H1 (cell line): ENCODE measurements at regions of chr6 and their contacts with region 1.

Region 1: DNA sequence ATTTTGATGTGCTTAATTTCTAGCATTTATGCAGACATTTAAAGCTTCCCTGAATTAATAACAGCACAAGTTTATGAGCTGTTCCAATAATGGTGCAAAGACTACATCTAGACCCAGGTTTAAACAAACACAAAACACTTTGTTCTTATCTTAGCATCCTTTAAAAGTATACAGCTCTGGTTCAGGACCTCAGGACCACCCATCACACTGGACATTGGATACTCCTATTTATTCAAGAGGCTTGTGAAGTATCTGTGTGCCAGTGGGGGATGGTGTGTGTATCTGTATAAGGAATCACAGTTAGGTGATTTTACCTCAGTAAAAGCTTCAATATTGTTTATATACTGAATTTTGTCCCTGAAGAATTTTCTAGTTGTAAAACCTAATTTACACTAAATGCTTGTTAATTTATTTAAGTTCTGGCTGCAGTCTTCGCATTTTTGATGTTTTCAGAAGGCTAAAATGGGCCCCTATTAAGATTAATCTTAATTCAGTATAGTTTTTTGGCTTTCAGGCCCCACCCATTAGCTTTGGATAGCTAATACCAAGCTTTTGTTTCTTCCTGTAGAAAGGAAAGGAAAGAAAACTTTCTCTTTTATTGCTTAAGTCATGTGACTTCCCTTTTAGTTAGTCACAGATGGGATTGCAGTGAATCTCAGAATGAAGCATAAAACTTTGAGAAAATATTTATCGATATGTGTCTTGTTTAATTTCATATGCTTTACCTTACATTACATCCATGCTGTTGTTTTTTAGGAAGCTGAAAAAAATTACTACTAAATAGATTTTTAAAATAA is 13.1 kb downstream of the LIN28B start:
- DNase-seq: no peak
- H3K4me3 ChIP-seq: peak overlapping the region in 1 of 4 experiments; percentile 21; a peak in 1 of 8 replicates
- H3K27ac ChIP-seq: no peak overlapping the region
- H3K4me1 ChIP-seq: peaks cover 0 to 11% (median 5%) of the 10 kb centered on the region in 4 experiments; a peak in 5 of 7 replicates
- H3K27me3 ChIP-seq: no peaks in the 10 kb centered on the region
- CTCF ChIP-seq: no peak
- EP300 ChIP-seq: no peak
- POLR2A ChIP-seq: no peak
- RAD21 ChIP-seq: no peak

Region 2: GRCh38 chr6:104921896-104922295 is 48.1 kb before region 1 on chr6:
- CTCF ChIA-PET with region 1: no interaction called
- POLR2A ChIA-PET with region 1: no interaction called
- DNase-seq: no peak
- H3K4me3 ChIP-seq: no peak overlapping the region
- H3K27ac ChIP-seq: no peak overlapping the region
- H3K4me1 ChIP-seq: peaks cover 0 to 3% (median 1%) of the 10 kb centered on the region in 4 experiments; a peak in 2 of 7 replicates
- H3K27me3 ChIP-seq: no peaks in the 10 kb centered on the region
- CTCF ChIP-seq: no peak
- EP300 ChIP-seq: no peak
- POLR2A ChIP-seq: no peak
- RAD21 ChIP-seq: no peak

Region 3: DNA sequence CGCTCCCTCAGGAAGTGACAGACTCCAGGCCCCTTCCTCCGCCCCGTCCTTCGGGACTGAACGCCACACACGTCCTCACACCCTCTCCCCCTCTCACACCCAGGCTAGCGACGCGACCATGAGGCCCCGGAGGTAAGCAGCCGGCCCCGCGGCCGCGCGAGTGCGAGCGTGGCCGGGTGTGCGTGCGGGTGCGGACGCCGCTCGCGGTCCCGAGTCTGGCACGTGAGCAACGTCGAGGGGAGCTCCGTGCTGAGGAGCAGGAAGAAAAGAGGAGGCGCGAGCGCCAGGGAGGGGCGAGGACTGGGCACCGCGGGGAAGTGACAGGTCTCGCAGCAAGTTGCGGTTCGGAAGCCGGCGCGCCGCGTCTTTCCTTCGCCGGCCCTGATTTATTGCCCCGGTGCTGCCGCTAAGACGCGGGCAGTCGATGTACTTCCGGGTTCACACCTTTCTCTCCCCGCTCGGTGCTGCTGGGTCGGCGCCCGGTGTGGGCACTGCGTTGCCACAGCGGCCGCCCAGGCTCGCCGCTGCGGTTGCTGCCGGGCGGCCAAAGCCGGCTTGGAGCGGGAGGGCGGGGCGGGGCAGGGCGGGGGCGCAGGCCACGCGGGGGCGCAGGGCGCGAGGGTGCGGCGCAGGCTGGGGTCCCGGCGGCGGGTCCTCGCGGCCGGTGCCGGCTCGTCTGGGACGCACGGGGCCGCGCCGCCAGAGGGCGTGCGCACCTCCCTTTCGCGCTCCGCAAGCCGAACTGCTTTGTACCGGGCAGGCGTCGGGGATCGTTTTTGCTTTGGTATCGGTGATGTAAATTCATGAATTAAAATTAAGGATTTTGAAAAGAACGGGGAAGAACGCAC is 28.9 kb before region 1 on chr6:
- CTCF ChIA-PET with region 1: interaction called, 3 read pairs
- POLR2A ChIA-PET with region 1: interaction called, 12 read pairs
- DNase-seq: peak in 1 of 2 experiments; percentile 89
- H3K4me3 ChIP-seq: peak overlapping the region; percentile 52 to 95 (median 74)
- H3K27ac ChIP-seq: peak overlapping the region; percentile 87
- H3K4me1 ChIP-seq: peaks cover 0 to 9% (median 4%) of the 10 kb centered on the region in 4 experiments; a peak in 3 of 7 replicates
- H3K27me3 ChIP-seq: no peaks in the 10 kb centered on the region
- CTCF ChIP-seq: peak; percentile 71 to 90 (median 75)
- EP300 ChIP-seq: 0 out of 3 replicates have a peak, but pooled peaks of 1 of the 2 experiments have one; percentile 20
- POLR2A ChIP-seq: peak in 1 of 2 experiments; percentile 33; a peak in 2 of 3 replicates
- RAD21 ChIP-seq: peak; percentile 79 to 80

Region 4: DNA sequence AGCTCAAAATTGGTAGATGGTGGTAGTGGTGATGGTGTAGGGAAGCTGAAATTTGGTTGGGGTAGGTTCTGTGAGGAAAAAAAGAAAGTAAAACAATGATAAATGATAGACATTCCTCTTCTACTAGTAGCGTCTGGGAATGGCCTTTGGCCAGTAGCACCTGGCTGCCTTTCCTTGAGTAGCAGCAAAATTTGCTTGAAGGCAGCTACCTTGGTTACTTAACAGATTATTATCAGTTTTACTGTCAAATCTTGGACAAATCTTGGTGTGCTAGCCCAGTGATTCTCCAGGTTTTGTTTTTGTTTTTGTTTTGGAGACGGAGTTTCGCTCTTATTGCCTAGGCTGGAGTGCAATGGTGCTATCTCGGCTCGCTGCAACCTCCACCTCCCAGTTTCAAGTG is 13.3 kb after region 1 on chr6:
- CTCF ChIA-PET with region 1: no interaction called
- POLR2A ChIA-PET with region 1: interaction called, 12 read pairs
- DNase-seq: no peak
- H3K4me3 ChIP-seq: no peak overlapping the region
- H3K27ac ChIP-seq: no peak overlapping the region
- H3K4me1 ChIP-seq: no peaks in the 10 kb centered on the region; a peak in 1 of 7 replicates
- H3K27me3 ChIP-seq: no peaks in the 10 kb centered on the region
- CTCF ChIP-seq: no peak
- EP300 ChIP-seq: no peak
- POLR2A ChIP-seq: no peak
- RAD21 ChIP-seq: no peak

Region 5: GRCh38 chr6:105651969-105652368 is 682.0 kb after region 1 on chr6:
- CTCF ChIA-PET with region 1: no interaction called
- POLR2A ChIA-PET with region 1: no interaction called
- DNase-seq: no peak
- H3K4me3 ChIP-seq: no peak overlapping the region
- H3K27ac ChIP-seq: no peak overlapping the region
- H3K4me1 ChIP-seq: peaks cover 0 to 3% (median 0%) of the 10 kb centered on the region in 4 experiments; a peak in 1 of 7 replicates
- H3K27me3 ChIP-seq: no peaks in the 10 kb centered on the region
- CTCF ChIP-seq: no peak
- EP300 ChIP-seq: no peak
- POLR2A ChIP-seq: no peak
- RAD21 ChIP-seq: no peak